Left ventricle myocardium inferior (tissue), 1 donor: ENCODE measurements at regions of chr9 and their contacts with region 1.

Region 1: GRCh38 chr9:7536310-7536939 is 263.2 kb downstream of the DMAC1 start:
- DNase-seq: no peak
- H3K4me3 ChIP-seq: no peak overlapping the region
- H3K27ac ChIP-seq: no peak overlapping the region
- H3K4me1 ChIP-seq: peaks cover 5% of the 10 kb centered on the region
- H3K27me3 ChIP-seq: no peaks in the 10 kb centered on the region
- CTCF ChIP-seq: peak; percentile 81

Region 2: DNA sequence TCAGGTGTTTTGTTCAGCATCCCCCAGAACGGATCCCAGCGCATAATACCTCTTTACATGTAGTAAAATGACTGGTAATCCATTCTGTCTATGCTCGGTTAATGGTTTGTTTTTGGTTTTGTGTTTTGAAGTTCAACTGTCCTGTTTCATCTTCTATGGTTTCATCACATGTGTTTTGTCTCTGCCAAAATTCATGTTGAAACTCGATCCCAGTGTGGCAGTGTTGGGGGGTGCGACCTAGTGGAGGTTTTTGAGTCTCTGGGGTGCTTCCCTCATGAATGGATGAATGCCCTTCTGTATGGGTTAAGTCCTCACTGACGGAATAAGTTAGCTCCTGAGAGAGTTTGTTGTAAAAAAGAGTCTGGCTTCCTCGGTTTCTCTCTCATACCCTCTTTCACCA is 461.3 kb before region 1 on chr9:
- intact Hi-C with region 1: loop called (anchors 10 kb)
- DNase-seq: no peak
- H3K4me3 ChIP-seq: no peak overlapping the region
- H3K27ac ChIP-seq: no peak overlapping the region
- H3K4me1 ChIP-seq: no peaks in the 10 kb centered on the region
- H3K27me3 ChIP-seq: no peaks in the 10 kb centered on the region
- CTCF ChIP-seq: no peak

Region 3: GRCh38 chr9:7273391-7273974 is 262.9 kb before region 1 on chr9:
- intact Hi-C with region 1: loop called (anchors 10 kb)
- DNase-seq: peak; percentile 23
- H3K4me3 ChIP-seq: no peak overlapping the region
- H3K27ac ChIP-seq: no peak overlapping the region
- H3K4me1 ChIP-seq: no peaks in the 10 kb centered on the region
- H3K27me3 ChIP-seq: peaks cover 8% of the 10 kb centered on the region
- CTCF ChIP-seq: peak; percentile 73

Region 4: GRCh38 chr9:7298123-7298522 is 238.3 kb before region 1 on chr9:
- intact Hi-C with region 1: no loop called
- DNase-seq: no peak
- H3K4me3 ChIP-seq: no peak overlapping the region
- H3K27ac ChIP-seq: no peak overlapping the region
- H3K4me1 ChIP-seq: no peaks in the 10 kb centered on the region
- H3K27me3 ChIP-seq: no peaks in the 10 kb centered on the region
- CTCF ChIP-seq: no peak

Region 5: DNA sequence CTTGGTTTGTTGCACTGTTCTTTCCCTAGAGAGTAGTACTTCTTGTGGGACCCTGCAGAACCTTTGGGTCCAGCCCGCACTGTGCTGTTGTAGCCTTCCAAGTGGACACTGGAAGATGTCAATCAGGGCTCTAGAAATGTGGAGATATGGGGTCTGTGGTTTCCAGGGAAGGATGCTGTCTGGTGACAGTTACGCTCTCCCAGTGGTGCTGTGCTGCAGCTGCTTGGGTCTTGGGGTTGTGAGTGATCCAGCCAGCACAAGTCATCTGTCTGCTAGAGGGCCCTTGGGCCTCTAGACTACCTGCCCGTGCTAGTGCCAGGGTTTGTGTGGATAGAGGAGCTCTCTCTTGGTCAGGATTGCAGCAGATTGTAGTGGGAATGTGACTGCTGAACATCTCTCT is 221.3 kb before region 1 on chr9:
- intact Hi-C with region 1: no loop called
- DNase-seq: no peak
- H3K4me3 ChIP-seq: no peak overlapping the region
- H3K27ac ChIP-seq: peak overlapping the region; percentile 72
- H3K4me1 ChIP-seq: peaks cover 23% of the 10 kb centered on the region
- H3K27me3 ChIP-seq: no peaks in the 10 kb centered on the region
- CTCF ChIP-seq: no peak

Region 6: DNA sequence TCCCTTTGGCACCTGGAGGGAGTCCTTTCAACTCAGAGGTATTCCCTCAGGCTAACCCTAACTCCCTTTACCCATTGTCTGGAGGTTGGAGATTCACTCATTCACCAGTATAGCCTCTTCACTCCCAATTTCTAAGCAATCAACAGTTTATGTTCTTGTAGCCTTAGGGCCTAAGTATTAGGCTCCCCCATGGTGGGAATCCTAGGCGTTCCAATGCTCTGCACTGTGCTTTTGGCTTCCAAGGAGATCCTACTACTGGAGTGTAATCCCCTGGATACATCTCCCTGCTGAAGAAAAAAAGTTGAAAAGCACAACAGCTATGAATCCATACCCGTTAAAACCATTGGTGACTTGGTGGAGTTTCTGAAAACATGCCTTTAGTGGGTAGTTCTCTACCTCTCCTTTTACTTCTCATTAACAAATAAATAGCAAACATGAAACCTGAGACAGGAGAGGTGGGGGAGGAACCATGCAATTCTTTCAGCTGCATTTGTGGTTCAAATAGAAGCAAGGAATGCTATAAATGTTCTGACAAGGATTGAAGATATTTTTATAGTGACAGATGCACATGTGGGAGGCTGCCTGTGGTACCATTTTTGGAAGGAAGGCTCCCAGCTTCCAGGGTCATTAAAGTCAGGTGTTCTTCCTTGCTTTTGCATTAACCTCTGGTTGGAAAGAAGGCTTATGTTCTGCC is 133.9 kb before region 1 on chr9:
- intact Hi-C with region 1: loop called (anchors 5 kb)
- DNase-seq: no peak
- H3K4me3 ChIP-seq: no peak overlapping the region
- H3K27ac ChIP-seq: peak overlapping the region; percentile 43
- H3K4me1 ChIP-seq: peaks cover 26% of the 10 kb centered on the region
- H3K27me3 ChIP-seq: no peaks in the 10 kb centered on the region
- CTCF ChIP-seq: no peak